Adrenal gland (tissue), 19 donors: ENCODE measurements at regions of chrX and their contacts with region 1.

Region 1: GRCh38 chrX:41350976-41351569 is 17.1 kb downstream of the DDX3X start:
- DNase-seq: no peak
- H3K4me3 ChIP-seq: no peak overlapping the region
- H3K27ac ChIP-seq: no peak overlapping the region
- H3K4me1 ChIP-seq: peaks cover 0 to 12% of the 10 kb centered on the region in 2 donors
- H3K27me3 ChIP-seq: no peaks in the 10 kb centered on the region
- CTCF ChIP-seq: no peak
- POLR2A ChIP-seq: no peak

Region 2: DNA sequence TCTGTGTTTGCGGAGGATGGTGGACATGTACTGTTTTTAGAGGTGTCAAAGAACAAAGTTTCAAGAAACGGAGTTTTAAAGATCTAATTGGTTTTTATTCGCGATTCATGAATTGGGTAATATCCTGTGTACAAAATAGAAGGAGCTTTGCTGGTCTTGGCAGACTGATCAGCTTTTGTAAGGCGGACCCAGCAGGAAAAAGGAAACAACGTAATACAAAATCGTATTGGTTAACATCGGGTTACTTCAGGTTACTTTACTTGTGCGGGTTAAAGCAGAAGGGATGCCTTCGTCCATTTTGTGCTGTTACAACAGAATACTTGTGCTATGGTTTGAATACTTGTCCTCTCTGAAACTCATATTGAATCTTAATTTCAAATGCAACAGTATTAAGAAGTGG is 84.6 kb after region 1 on chrX:
- intact Hi-C with region 1: loop called in 1 of 2 experiments (anchors 10 kb)
- DNase-seq: no peak
- H3K4me3 ChIP-seq: no peak overlapping the region
- H3K27ac ChIP-seq: peak overlapping the region in 1 of 5 donors; percentile 56
- H3K4me1 ChIP-seq: no peaks in the 10 kb centered on the region
- H3K27me3 ChIP-seq: peaks cover 5% of the 10 kb centered on the region
- CTCF ChIP-seq: no peak
- POLR2A ChIP-seq: no peak